Mucosa of descending colon (tissue), 3 donors: ENCODE measurements at regions of chr3 and their contacts with region 1.

Region 1: GRCh38 chr3:16600780-16601539 is 4.3 kb downstream of the DAZL start:
- DNase-seq: peak; percentile 58 to 90 (median 69)
- ATAC-seq: peak; percentile 48
- H3K4me3 ChIP-seq: no peak overlapping the region
- H3K4me1 ChIP-seq: no peaks in the 10 kb centered on the region
- CTCF ChIP-seq: peak; percentile 69

Region 2: GRCh38 chr3:16496008-16496407 is 105.0 kb before region 1 on chr3:
- intact Hi-C with region 1: no loop called
- DNase-seq: no peak
- ATAC-seq: no peak
- H3K4me3 ChIP-seq: no peak overlapping the region
- H3K4me1 ChIP-seq: no peaks in the 10 kb centered on the region
- CTCF ChIP-seq: no peak

Region 3: GRCh38 chr3:17233398-17233800 is 632.4 kb after region 1 on chr3:
- intact Hi-C with region 1: loop called in 1 of 2 experiments (anchors 5 kb)
- DNase-seq: peak in 1 of 3 donors; percentile 25
- ATAC-seq: peak; percentile 85
- H3K4me3 ChIP-seq: no peak overlapping the region
- H3K4me1 ChIP-seq: no peaks in the 10 kb centered on the region
- CTCF ChIP-seq: peak; percentile 41

Region 4: GRCh38 chr3:17412950-17413530 is 812.1 kb after region 1 on chr3:
- intact Hi-C with region 1: loop called in 1 of 2 experiments (anchors 5 kb)
- DNase-seq: peak in 1 of 3 donors; percentile 58
- ATAC-seq: peak; percentile 77
- H3K4me3 ChIP-seq: no peak overlapping the region
- H3K4me1 ChIP-seq: no peaks in the 10 kb centered on the region
- CTCF ChIP-seq: peak; percentile 57